A549 (cell line): ENCODE measurements at regions of chr12 and their contacts with region 1.

Region 1: DNA sequence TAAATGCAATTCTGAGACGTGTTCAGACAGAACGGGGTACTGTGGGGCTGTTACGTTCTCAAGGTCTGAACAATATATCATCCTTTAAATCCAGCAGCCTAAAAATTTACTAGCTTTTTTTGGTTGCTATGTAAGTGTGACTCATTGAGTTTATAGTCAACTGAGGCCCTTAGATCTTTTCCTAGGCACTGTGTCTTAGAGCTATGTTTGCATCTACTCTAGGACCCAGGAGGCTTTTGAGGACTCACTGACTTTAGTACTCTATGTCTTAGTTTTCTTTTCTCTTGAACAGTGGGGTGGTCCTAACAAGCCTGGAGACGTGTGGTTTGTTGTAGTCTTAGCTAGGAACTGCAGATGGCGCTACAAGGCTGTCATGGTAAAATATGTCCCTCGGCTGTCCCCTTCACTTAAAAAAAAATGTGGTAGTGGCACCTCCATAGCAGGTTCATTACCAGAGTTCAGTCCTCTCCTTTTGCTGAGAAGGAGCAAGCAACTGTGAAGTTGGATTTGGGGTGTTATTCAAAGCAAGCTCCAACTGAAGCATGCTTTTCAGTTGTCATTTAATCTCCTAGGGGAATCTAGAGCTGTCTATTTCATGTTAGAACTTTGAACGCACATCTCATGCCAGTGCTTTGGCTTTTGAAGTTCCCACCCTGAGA is 8.7 kb upstream of the SPATS2 start:
- DNase-seq: peak; percentile 80 to 84
- ATAC-seq: peak; percentile 87 to 92
- H3K4me3 ChIP-seq: no peak overlapping the region
- H3K27ac ChIP-seq: peak overlapping the region; percentile 52 to 65; a peak in 5 of 6 replicates
- H3K4me1 ChIP-seq: peaks cover 28% of the 10 kb centered on the region
- CTCF ChIP-seq: peak; percentile 96
- EP300 ChIP-seq: no peak
- POLR2A ChIP-seq: no peak
- RAD21 ChIP-seq: peak; percentile 96 to 98

Region 2: GRCh38 chr12:49260166-49260565 is 98.4 kb before region 1 on chr12:
- CTCF ChIA-PET with region 1: no interaction called
- POLR2A ChIA-PET with region 1: no interaction called
- DNase-seq: no peak
- ATAC-seq: no peak
- H3K4me3 ChIP-seq: no peak overlapping the region
- H3K27ac ChIP-seq: peak overlapping the region in 1 of 2 experiments; percentile 23; a peak in 1 of 6 replicates
- H3K4me1 ChIP-seq: 0 out of 3 replicates have a peak, but pooled peaks cover 4% of the 10 kb centered on the region
- CTCF ChIP-seq: no peak
- EP300 ChIP-seq: no peak
- POLR2A ChIP-seq: no peak
- RAD21 ChIP-seq: no peak

Region 3: GRCh38 chr12:49296034-49296835 is 62.4 kb before region 1 on chr12:
- CTCF ChIA-PET with region 1: interaction called, 29 read pairs
- POLR2A ChIA-PET with region 1: no interaction called
- DNase-seq: peak; percentile 69 to 88
- ATAC-seq: peak; percentile 60 to 83
- H3K4me3 ChIP-seq: peak overlapping the region; percentile 52
- H3K27ac ChIP-seq: peak overlapping the region; percentile 50 to 80; a peak in 5 of 6 replicates
- H3K4me1 ChIP-seq: peaks cover 18% of the 10 kb centered on the region; the same call in 2 of the 3 replicates
- CTCF ChIP-seq: peak; percentile 81
- EP300 ChIP-seq: no peak
- POLR2A ChIP-seq: no peak
- RAD21 ChIP-seq: peak in 1 of 2 experiments; percentile 34; a peak in 2 of 5 replicates

Region 4: GRCh38 chr12:49342066-49342913 is 16.3 kb before region 1 on chr12:
- CTCF ChIA-PET with region 1: interaction called, 194 read pairs
- POLR2A ChIA-PET with region 1: interaction called, 9 read pairs
- DNase-seq: peak; percentile 88 to 95
- ATAC-seq: peak; percentile 60 to 83
- H3K4me3 ChIP-seq: peak overlapping the region; percentile 48
- H3K27ac ChIP-seq: peak overlapping the region; percentile 72 to 86
- H3K4me1 ChIP-seq: peaks cover 41% of the 10 kb centered on the region
- CTCF ChIP-seq: peak; percentile 98
- EP300 ChIP-seq: no peak
- POLR2A ChIP-seq: no peak
- RAD21 ChIP-seq: peak; percentile 54 to 66

Region 5: DNA sequence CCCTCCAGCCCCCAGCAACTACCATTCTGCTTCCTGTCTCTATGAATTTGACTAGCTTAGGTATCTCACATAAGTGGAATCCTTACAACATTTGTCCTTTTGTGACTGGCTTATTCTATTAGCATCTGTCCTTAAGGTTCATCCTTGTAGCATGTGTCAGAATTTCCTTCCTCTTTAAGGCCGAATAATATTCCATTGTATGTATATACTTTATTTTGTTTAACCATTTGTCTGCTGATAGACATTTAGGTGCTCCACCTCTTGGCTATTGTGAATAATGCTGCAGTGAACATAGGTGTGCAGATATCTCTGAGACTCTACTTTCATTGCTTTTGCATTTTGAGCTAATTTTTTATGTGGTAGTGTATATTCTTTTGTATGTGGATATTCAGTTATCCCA is 84.3 kb after region 1 on chr12:
- CTCF ChIA-PET with region 1: interaction called, 13 read pairs
- POLR2A ChIA-PET with region 1: no interaction called
- DNase-seq: no peak
- ATAC-seq: no peak
- H3K4me3 ChIP-seq: no peak overlapping the region
- H3K27ac ChIP-seq: no peak overlapping the region
- H3K4me1 ChIP-seq: peaks cover 21% of the 10 kb centered on the region
- CTCF ChIP-seq: no peak
- EP300 ChIP-seq: no peak
- POLR2A ChIP-seq: no peak
- RAD21 ChIP-seq: no peak

Region 6: DNA sequence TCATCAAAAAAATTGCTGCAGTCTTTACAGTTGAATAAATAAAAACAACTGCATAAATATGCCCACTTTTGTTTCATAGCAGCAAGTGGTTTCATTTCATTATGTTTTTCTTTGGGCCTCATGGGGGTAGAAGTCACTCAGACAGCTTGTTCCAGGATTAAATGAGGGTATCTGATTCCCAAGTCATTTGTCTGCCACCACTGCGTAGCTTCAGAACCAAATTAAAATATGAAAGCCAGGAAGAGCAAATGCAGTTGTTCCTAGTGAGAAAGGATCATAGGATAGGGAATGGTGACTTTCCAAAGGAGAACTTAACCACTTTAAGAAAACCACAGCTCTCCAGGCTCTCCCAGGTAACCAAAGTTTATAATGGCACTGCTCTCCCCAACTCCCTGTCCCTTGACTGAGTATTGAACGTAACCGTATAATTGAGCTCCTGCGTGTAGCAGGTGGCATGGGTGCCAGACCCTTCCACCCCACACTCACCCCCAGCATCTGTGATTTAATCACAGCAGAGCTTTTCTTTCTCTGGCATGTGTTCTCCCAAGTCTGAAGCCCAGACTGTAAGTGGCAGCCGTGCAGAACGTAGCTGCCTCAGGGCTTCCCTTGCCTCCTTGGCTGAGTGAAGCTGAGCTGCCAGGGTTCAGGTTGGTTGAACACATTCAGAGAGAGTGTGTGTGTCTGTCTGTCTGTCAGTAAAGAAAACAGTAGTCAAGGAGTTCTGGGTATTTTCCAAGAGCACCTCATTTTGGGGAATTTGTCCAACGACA is 168.9 kb after region 1 on chr12:
- CTCF ChIA-PET with region 1: interaction called, 67 read pairs
- POLR2A ChIA-PET with region 1: no interaction called
- DNase-seq: no peak
- ATAC-seq: no peak
- H3K4me3 ChIP-seq: no peak overlapping the region
- H3K27ac ChIP-seq: no peak overlapping the region
- H3K4me1 ChIP-seq: no peaks in the 10 kb centered on the region
- CTCF ChIP-seq: no peak
- EP300 ChIP-seq: no peak
- POLR2A ChIP-seq: peak; percentile 21; the same call in 1 of the 2 replicates
- RAD21 ChIP-seq: no peak

Region 7: GRCh38 chr12:49567611-49568441 is 209.2 kb after region 1 on chr12 and contains the start of gene MCRS1:
- CTCF ChIA-PET with region 1: interaction called, 22 read pairs
- POLR2A ChIA-PET with region 1: interaction called, 4 read pairs
- DNase-seq: peak; percentile 94 to 99
- ATAC-seq: peak; percentile 89 to 90
- H3K4me3 ChIP-seq: peak within 1 kb of the TSS; percentile 65
- H3K27ac ChIP-seq: peak within 1 kb of the TSS; percentile 95 to 99
- H3K4me1 ChIP-seq: peaks cover 13% of the 10 kb centered on the region
- CTCF ChIP-seq: no peak
- EP300 ChIP-seq: no peak
- POLR2A ChIP-seq: peak; percentile 63
- RAD21 ChIP-seq: no peak
- polyA plus RNA-seq, gene MCRS1: 68.5 and 69.4 TPM in 2 replicates